Activated T-helper 2 cell treated with anti-CD3 and anti-CD28 coated beads, Interferon-gamma antibody, Interleukin-2, Interleukin-4, amounts not matched to agents 10 μg/mL and 5 μg/mL and 100 μg/mL, durations not matched to agents 14 hours and 24 hours and 36 hours (primary cell): ENCODE measurements at regions of chr1 and their contacts with region 1.

Region 1: DNA sequence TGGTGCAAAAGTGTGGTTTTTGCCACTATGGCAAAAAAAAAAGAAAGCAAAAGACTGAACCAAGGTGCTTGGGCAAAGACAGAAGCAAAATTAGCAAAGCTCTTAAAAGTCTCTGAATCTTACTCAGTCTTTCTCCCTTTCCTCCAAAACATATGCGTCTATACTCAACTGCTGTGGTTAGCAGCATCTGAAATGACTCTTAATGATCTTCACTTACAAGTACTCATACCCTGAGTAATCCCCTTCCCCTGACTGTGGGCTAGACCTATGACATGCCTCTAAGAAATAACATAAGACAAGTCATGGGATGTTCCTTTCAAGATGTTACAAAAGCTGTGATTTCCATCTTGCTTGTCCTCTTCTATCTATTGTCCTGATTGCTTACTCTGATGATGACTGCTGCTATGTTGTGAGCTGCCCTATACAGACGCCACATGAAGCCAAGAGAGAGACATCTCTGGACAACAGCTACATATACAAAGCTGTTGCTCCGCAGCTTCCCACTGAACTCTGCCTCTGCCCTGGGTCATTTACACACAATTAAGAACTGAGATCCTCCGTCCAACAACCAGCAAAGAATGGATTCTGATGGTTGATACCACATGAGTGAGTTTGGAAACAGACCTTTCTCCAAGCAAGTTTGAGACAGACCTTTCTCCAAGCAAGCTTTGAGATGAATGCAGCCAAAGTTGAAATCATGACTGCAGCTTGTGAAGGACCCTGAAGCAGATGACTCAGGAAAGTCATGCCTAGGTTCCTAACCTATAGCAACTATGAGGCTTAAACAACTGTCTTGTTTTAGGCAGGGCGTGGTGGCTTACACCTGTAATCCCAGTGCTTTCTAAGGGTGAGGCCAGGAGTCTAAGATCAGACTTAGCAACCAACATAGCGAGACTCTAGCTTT is 55.2 kb downstream of the PUM1 start:
- DNase-seq: no peak
- H3K4me3 Mint-ChIP-seq: peak overlapping the region; percentile 0
- H3K27ac Mint-ChIP-seq: peak overlapping the region; percentile 93
- H3K4me1 Mint-ChIP-seq: peaks cover 68% of the 10 kb centered on the region
- H3K27me3 Mint-ChIP-seq: no peaks in the 10 kb centered on the region

Region 2: GRCh38 chr1:30525971-30526651 is 484.2 kb before region 1 on chr1:
- intact Hi-C with region 1: no loop called
- DNase-seq: no peak
- H3K4me3 Mint-ChIP-seq: no peak overlapping the region
- H3K27ac Mint-ChIP-seq: no peak overlapping the region
- H3K4me1 Mint-ChIP-seq: no peaks in the 10 kb centered on the region
- H3K27me3 Mint-ChIP-seq: no peaks in the 10 kb centered on the region

Region 3: DNA sequence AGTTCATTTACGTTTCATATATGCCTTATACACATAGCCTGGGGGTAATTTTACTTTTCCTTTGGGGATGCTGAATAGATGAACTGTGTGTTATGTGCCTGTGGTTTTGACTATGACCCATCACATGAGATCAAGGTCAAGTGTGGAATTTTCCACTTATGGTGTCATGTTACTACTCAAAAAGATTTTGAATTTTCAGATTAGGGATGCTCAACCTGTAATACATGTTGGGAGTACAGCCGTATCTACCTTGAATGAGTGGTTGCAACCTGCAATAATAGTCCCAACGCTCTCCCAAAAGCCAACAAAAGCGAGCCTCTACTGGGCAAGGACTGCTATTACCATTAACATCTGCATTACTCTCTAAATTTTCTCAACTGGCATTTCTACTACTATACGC is 33.2 kb before region 1 on chr1:
- intact Hi-C with region 1: loop called (anchors 2 kb)
- DNase-seq: no peak
- H3K4me3 Mint-ChIP-seq: no peak overlapping the region
- H3K27ac Mint-ChIP-seq: peak overlapping the region; percentile 74
- H3K4me1 Mint-ChIP-seq: peaks cover 48% of the 10 kb centered on the region
- H3K27me3 Mint-ChIP-seq: no peaks in the 10 kb centered on the region

Region 4: DNA sequence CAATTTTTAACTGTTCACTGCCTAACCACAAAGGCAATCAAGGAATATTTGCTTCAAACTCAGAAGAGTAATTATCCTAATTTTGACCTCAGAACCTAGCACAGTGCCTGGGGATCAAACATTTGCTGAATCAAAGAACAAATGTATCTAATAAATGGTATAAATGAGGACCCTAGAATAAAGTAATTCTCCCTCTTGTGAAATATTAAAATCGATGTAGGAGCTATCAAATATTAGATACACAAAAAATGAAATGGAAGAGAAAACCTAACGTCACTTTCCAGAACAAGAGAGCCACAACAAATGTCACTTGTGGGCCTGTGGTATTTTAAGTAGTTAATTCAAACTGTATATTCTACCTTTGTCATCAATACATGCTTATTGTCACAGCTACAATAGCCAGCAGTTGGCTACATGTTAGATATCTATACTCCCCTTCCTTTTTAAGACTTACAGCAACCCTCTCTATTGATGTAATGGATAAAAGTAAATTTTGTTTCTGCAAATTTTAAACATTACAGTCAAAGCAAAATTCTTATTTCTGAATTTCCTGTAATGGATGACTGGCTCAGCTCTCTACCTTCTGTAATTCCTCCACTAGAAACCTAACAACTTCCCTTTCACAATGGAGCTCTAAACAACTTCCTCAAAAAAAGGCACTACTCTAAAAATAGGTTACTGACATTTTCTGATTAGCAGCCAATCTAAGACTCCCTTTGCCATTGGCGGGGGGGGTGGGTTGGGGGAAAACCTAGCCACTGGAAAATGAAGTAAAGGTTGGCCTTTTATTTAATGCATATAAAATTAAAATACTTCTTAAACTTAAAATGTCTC is 17.6 kb after region 1 on chr1:
- intact Hi-C with region 1: loop called (anchors 2 kb)
- DNase-seq: no peak
- H3K4me3 Mint-ChIP-seq: no peak overlapping the region
- H3K27ac Mint-ChIP-seq: peak overlapping the region; percentile 5
- H3K4me1 Mint-ChIP-seq: peaks cover 54% of the 10 kb centered on the region
- H3K27me3 Mint-ChIP-seq: no peaks in the 10 kb centered on the region

Region 5: GRCh38 chr1:31038360-31038759 is 28.0 kb after region 1 on chr1:
- intact Hi-C with region 1: loop called (anchors 1 kb)
- DNase-seq: no peak
- H3K4me3 Mint-ChIP-seq: no peak overlapping the region
- H3K27ac Mint-ChIP-seq: peak overlapping the region; percentile 40
- H3K4me1 Mint-ChIP-seq: peaks cover 50% of the 10 kb centered on the region
- H3K27me3 Mint-ChIP-seq: no peaks in the 10 kb centered on the region

Region 6: DNA sequence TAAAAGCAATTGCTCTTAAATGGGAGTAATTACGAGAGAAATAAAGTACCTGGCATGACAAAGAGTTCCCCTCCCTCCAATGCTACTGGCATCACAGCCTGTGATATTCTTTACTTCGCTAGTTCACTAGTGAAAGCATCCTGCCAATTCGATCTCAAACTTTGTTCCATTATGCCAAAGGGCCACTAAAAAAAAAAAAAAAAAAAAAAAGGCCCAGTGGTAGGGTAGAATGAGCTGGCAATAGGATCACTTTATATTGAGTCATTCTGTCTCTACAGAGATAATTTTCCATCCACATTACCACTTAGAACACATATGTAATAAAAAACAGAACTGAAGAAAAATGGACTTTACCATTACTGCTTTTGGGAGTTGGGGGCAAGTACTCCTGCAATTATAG is 44.0 kb after region 1 on chr1:
- intact Hi-C with region 1: loop called (anchors 1 kb)
- DNase-seq: no peak
- H3K4me3 Mint-ChIP-seq: no peak overlapping the region
- H3K27ac Mint-ChIP-seq: peak overlapping the region; percentile 84
- H3K4me1 Mint-ChIP-seq: peaks cover 42% of the 10 kb centered on the region
- H3K27me3 Mint-ChIP-seq: no peaks in the 10 kb centered on the region

Region 7: GRCh38 chr1:31065310-31066217 is 55.2 kb after region 1 on chr1 and contains the start of gene PUM1:
- intact Hi-C with region 1: loop called (anchors 1 kb)
- DNase-seq: peak; percentile 98
- H3K4me3 Mint-ChIP-seq: peak within 1 kb of the TSS; percentile 99
- H3K27ac Mint-ChIP-seq: peak within 1 kb of the TSS; percentile 96
- H3K4me1 Mint-ChIP-seq: peaks cover 20% of the 10 kb centered on the region
- H3K27me3 Mint-ChIP-seq: no peaks in the 10 kb centered on the region
- total RNA-seq, gene PUM1: 121 and 125 TPM in 2 replicates